Heart right ventricle (tissue), 16 donors: ENCODE measurements at regions of chr19 and their contacts with region 1.

Region 1: GRCh38 chr19:18203863-18204393 is at the start of gene RAB3A:
- DNase-seq: peak; percentile 100
- ATAC-seq: peak; percentile 93 to 96 (median 94)
- H3K4me3 ChIP-seq: peak within 1 kb of the TSS; percentile 51 to 80 (median 72)
- H3K27ac ChIP-seq: peak within 1 kb of the TSS; percentile 94 to 100 (median 97)
- H3K4me1 ChIP-seq: peaks cover 11 to 35% (median 22%) of the 10 kb centered on the region in 9 donors
- H3K27me3 ChIP-seq: peaks cover 0 to 8% (median 0%) of the 10 kb centered on the region in 7 donors
- CTCF ChIP-seq: peak in 2 of 9 donors; percentile 12 to 21
- total RNA-seq, gene RAB3A: 24.1 to 36.3 (median 31.4) TPM

Region 2: GRCh38 chr19:18192673-18193387 is 11.1 kb before region 1 on chr19 and contains the start of gene MPV17L2:
- intact Hi-C with region 1: loop called in 1 of 10 experiments (anchors 1 kb)
- DNase-seq: peak; percentile 99 to 100
- ATAC-seq: peak; percentile 93 to 98 (median 96)
- H3K4me3 ChIP-seq: peak within 1 kb of the TSS; percentile 65 to 98 (median 82)
- H3K27ac ChIP-seq: peak within 1 kb of the TSS; percentile 69 to 97 (median 94)
- H3K4me1 ChIP-seq: peaks cover 8 to 34% (median 19%) of the 10 kb centered on the region in 9 donors
- H3K27me3 ChIP-seq: no peaks in the 10 kb centered on the region
- CTCF ChIP-seq: no peak
- total RNA-seq, gene MPV17L2: 10.6 to 16.5 (median 14.5) TPM

Region 3: DNA sequence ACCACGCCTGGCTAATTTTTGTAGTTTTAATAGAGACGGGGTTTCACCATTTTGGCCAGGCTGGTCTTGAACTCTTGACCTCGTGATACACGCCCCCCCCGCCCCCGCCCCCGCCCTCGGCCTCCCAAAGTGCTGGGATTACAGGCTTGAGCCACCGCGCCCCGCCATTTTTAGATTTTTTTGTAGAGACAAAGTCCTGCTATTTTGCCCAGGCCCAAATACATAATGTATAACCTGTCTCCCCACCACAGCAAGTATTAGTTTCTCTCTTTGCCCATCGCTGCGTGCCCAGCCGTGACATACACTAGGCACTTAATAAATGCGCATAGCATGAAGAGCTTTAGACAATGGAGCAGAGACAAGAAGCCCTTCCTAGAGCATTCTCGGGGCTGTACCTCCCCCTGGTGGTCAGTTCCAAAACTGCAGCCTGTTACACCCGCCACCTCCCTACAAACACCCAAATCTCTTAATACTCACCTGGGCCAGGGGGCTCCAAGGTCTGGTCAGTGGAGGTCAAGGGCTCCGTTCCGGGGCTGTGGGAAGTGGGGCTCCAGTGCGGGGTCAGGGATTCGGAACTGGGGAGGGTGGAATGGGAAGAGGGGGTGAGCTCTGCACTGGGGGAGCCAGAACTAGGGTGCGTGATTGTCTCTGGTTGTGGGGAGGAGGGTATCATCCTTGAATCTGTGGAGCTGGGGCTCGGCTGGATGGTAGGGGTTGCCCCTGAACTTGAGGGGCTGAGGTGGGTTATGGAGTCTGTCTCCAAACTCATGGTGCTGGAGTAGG is 47.9 kb after region 1 on chr19:
- intact Hi-C with region 1: loop called in 6 of 10 experiments (anchors 1 to 5 kb)
- DNase-seq: peak; percentile 69 to 71
- ATAC-seq: peak; percentile 58 to 81 (median 72)
- H3K4me3 ChIP-seq: no peak overlapping the region
- H3K27ac ChIP-seq: no peak overlapping the region
- H3K4me1 ChIP-seq: peaks cover 0 to 10% (median 0%) of the 10 kb centered on the region in 9 donors
- H3K27me3 ChIP-seq: peaks cover 0 to 16% (median 10%) of the 10 kb centered on the region in 7 donors
- CTCF ChIP-seq: peak; percentile 89 to 94 (median 92)

Region 4: DNA sequence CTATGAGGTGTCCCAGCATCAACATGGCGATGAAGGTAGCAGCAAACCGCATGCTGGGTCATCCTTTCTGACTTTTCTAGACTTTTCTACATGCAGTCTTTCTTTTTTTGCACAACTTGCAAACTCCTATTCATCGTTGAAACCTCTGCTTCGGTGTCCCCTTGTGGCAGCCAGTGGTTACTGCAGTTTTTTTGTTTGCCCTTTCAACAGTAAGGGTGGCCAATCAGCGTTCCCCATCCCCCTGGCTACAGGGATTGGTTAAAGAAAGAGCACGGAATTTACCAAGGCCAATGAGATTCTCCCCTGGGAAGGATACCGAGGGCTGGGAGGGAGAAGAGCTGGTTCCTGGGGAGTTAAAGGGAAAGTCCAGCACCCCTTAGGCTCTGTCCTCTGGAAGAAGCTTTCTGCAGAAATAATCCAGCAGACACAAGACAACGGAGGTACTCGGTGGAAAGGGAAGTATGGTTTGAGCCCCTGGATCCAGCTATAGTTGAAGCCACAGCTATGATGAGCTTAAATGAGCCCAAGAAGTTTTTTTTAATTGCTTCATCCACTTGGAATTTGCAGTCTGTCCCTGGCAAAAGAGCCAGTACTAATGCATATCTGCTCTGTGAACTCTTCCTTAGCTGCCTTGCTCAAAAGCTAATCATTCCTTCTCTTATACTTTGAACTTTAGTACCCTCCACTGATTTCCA is 124.6 kb after region 1 on chr19:
- intact Hi-C with region 1: loop called in 7 of 10 experiments (anchors 1 to 10 kb)
- DNase-seq: peak; percentile 80 to 96
- ATAC-seq: peak; percentile 89 to 99 (median 96)
- H3K4me3 ChIP-seq: peak overlapping the region in 9 of 10 donors; percentile 11 to 47 (median 35)
- H3K27ac ChIP-seq: peak overlapping the region in 9 of 10 donors; percentile 24 to 89 (median 75)
- H3K4me1 ChIP-seq: peaks cover 4 to 24% (median 22%) of the 10 kb centered on the region in 9 donors
- H3K27me3 ChIP-seq: no peaks in the 10 kb centered on the region
- CTCF ChIP-seq: peak; percentile 90 to 96 (median 92)

Region 5: DNA sequence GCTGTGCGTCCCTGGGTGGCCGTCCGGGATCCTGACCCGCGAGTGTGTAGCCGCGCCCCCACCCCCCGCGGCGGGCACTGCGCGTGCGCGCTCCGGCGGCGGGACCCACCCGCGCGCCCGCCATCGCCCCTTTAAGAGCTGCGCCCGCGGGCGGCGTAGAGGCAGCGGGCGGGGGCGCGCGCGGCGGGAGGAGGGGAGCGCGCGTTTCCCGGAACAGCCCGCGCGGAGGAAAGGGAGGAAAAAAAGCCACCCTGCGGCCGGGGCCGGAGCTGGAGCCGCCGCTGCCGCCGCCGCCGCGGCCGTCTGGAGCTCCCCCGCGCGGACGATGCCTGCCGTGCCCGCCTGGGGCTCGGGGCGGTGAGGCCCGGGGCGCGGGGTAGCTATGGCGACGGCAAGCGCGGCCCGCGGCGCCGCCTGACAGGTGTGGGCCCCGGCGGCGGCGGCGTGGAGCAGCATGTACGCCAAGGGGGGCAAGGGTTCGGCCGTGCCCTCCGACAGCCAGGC is 215.3 kb after region 1 on chr19 and contains the start of gene SSBP4:
- intact Hi-C with region 1: loop called in 5 of 10 experiments (anchors 5 to 10 kb)
- DNase-seq: peak; percentile 69 to 82
- ATAC-seq: peak in 6 of 8 donors; percentile 0 to 30 (median 7)
- H3K4me3 ChIP-seq: peak within 1 kb of the TSS; percentile 45 to 82 (median 76)
- H3K27ac ChIP-seq: peak within 1 kb of the TSS; percentile 78 to 99 (median 96)
- H3K4me1 ChIP-seq: peaks cover 33 to 93% (median 84%) of the 10 kb centered on the region in 9 donors
- H3K27me3 ChIP-seq: peaks cover 0 to 15% (median 0%) of the 10 kb centered on the region in 7 donors
- CTCF ChIP-seq: peak in 8 of 9 donors; percentile 5 to 66 (median 36)
- total RNA-seq, gene SSBP4: 17.6 to 47.1 (median 27.3) TPM